ENCODE measurements at regions of chr2 and their contacts with region 1.

Region 1: DNA sequence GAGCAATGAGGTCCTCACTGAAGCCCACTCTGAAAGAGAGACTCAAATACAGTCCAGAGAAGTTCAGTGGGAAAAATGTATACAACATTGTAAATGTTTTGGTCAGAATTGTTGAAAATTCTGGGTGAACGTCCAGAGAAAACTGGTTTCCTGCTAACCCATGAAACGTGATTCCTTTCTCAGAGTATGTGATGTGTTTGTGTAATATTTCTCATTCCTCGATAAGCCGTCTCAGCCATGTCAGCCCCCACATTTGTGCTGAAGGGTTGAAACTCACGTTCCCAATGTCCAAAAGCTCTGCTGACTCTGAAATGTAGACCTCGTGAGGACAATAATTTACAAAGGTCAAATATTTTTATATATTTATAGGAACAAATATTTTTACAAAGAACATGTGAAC is 51.6 kb downstream of the BMP10 start:
- DNase-seq: no peak
- ATAC-seq: no peak
- H3K4me3 ChIP-seq: no peak overlapping the region
- H3K27ac ChIP-seq: no peak overlapping the region
- H3K4me1 ChIP-seq: peaks cover 0 to 13% (median 4%) of the 10 kb centered on the region in 12 donors
- H3K27me3 ChIP-seq: no peaks in the 10 kb centered on the region
- CTCF ChIP-seq: no peak
- POLR2A ChIP-seq: no peak

Region 2: DNA sequence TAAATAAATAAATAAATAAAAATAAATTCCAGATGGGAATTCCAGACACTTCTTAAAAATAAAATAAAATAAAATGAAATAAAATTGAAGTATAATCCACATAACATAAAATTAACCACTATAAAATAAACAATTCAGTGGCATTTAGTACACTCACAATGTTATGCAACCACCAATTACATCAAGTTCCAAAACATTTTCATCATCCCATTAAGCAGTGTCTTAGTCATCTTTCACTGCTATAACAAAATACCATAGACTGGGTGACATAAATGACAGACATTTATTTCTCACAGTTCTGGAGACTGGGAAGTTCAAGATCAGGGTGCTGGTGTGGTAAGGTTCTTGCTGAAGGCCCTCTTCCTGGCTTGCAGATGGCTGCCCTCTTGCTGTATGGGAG is 198.8 kb before region 1 on chr2:
- intact Hi-C with region 1: no loop called
- DNase-seq: no peak
- ATAC-seq: no peak
- H3K4me3 ChIP-seq: no peak overlapping the region
- H3K27ac ChIP-seq: no peak overlapping the region
- H3K4me1 ChIP-seq: no peaks in the 10 kb centered on the region
- H3K27me3 ChIP-seq: no peaks in the 10 kb centered on the region
- CTCF ChIP-seq: no peak
- POLR2A ChIP-seq: no peak

Region 3: DNA sequence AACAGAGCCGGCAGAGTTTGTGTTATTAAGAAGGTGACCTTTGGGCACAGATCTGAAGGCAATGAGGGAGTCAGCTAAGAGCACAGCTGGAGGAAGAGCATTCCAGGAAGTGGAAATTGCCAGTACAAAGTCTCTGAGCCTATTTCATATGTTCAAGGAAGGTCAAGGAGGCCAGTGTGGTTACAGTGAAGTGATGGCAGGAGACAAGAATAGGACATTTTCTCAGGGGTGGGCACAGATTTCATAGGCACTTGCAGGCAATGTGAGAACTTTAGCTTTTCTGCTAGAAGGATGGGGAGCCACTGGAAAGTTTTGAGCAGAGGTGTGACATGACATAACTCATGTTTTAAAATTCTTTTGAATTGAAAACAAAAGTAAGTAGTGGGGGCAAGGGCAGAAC is 34.6 kb before region 1 on chr2:
- intact Hi-C with region 1: loop called in 1 of 10 experiments (anchors 5 kb)
- DNase-seq: no peak
- ATAC-seq: peak in 1 of 4 donors; percentile 22
- H3K4me3 ChIP-seq: no peak overlapping the region
- H3K27ac ChIP-seq: peak overlapping the region in 2 of 12 donors; percentile 2 to 81
- H3K4me1 ChIP-seq: peaks cover 0 to 65% (median 3%) of the 10 kb centered on the region in 12 donors
- H3K27me3 ChIP-seq: no peaks in the 10 kb centered on the region
- CTCF ChIP-seq: no peak
- POLR2A ChIP-seq: no peak

Region 4: GRCh38 chr2:68870215-68870614 is 50.7 kb after region 1 on chr2:
- intact Hi-C with region 1: no loop called
- DNase-seq: no peak
- ATAC-seq: no peak
- H3K4me3 ChIP-seq: no peak overlapping the region
- H3K27ac ChIP-seq: no peak overlapping the region
- H3K4me1 ChIP-seq: no peaks in the 10 kb centered on the region
- H3K27me3 ChIP-seq: peaks cover 0 to 76% (median 6%) of the 10 kb centered on the region in 9 donors
- CTCF ChIP-seq: no peak
- POLR2A ChIP-seq: no peak